ENCODE measurements at regions of chr17 and their contacts with region 1.

Region 1: GRCh38 chr17:56939901-56940343 is 20.9 kb downstream of the COIL start:
- DNase-seq: no peak
- H3K4me3 ChIP-seq: no peak overlapping the region
- H3K27ac ChIP-seq: no peak overlapping the region
- H3K4me1 ChIP-seq: no peaks in the 10 kb centered on the region
- H3K27me3 ChIP-seq: no peaks in the 10 kb centered on the region
- CTCF ChIP-seq: peak; percentile 56 to 66 (median 61)
- POLR2A ChIP-seq: no peak

Region 2: GRCh38 chr17:56819431-56820145 is 120.3 kb before region 1 on chr17:
- intact Hi-C with region 1: loop called (anchors 10 kb)
- DNase-seq: peak; percentile 85
- H3K4me3 ChIP-seq: no peak overlapping the region
- H3K27ac ChIP-seq: no peak overlapping the region
- H3K4me1 ChIP-seq: no peaks in the 10 kb centered on the region
- H3K27me3 ChIP-seq: no peaks in the 10 kb centered on the region
- CTCF ChIP-seq: peak; percentile 77 to 91 (median 89)
- POLR2A ChIP-seq: no peak

Region 3: DNA sequence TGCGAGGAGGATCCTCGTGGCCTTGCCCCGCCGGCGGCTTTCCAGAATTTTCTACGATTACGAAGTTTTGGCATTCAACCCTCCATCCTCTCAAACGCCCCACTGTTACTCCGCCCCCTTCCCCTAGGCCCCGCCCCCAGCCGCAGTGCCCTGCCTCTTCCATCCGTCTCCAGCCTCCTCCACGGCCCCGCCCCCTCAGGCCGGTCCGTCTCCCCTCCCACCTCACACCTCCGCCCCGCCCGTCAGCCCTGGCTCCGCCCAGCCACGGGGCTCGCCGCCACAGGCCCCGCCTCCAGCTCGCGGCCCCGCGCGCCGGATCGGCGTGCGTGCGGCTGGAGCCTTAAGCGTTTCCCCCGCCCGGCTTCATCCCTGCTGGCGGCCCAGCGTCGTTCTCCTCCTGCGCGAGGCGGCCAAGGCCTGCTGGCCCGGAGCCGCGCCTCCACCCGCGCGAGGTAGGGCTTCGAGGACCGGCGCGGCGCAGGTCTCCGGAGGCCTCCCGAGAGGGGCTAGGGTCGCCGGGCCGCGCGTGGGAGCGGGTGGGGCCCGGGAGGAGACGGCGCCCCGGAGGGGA is 106.0 kb before region 1 on chr17 and contains the starts of genes C17orf67 and DGKE:
- intact Hi-C with region 1: no loop called
- DNase-seq: peak; percentile 99
- H3K4me3 ChIP-seq: peak within 1 kb of the TSS; percentile 79 to 89
- H3K27ac ChIP-seq: peak within 1 kb of the TSS; percentile 88 to 97
- H3K4me1 ChIP-seq: peaks cover 7% of the 10 kb centered on the region
- H3K27me3 ChIP-seq: no peaks in the 10 kb centered on the region
- CTCF ChIP-seq: no peak
- POLR2A ChIP-seq: no peak
- total RNA-seq, gene C17orf67: 3.7 to 5.3 TPM
- total RNA-seq, gene DGKE: 26.3 to 27.7 TPM

Region 4: DNA sequence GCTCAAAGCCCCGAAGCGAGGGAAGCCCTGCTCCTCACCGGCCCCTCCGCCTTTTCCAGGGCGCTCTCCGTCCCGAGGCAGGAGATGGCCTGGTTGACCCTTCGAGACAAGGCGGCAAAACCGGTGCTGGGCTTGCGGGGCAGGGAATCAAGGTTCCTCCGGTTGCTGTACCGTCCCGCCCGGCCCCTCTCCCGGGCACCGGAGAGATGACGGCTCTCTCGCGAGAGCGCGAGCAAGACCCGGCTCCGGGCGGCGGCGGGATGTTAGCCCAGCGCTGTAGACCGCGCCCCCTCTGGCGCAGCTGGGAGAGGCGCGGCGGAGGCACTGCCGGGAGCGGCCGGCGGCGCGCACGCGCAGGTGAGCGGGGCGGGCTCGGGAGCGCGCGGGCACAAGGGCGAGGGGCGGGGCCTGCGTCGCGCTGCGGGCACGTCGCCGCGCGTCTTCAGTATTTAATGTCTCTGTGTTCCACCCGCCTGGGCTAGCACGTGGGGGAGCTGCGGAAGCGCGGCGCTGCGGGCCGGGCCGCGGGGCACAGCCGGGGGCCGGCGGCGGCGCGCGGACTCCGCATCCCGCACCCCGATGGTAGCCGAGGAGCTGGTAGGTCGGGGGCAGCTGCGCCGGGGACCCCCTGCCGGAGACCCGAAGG is 145.0 kb after region 1 on chr17 and contains the start of gene AKAP1:
- intact Hi-C with region 1: no loop called
- DNase-seq: peak; percentile 96
- H3K4me3 ChIP-seq: peak within 1 kb of the TSS; percentile 84 to 87
- H3K27ac ChIP-seq: peak within 1 kb of the TSS; percentile 76 to 87
- H3K4me1 ChIP-seq: no peaks in the 10 kb centered on the region
- H3K27me3 ChIP-seq: no peaks in the 10 kb centered on the region
- CTCF ChIP-seq: peak in 1 of 3 experiments; percentile 51
- POLR2A ChIP-seq: peak; percentile 40
- total RNA-seq, gene AKAP1: 73.0 to 304 TPM

Measured in testis (tissue), 5 donors.